ENCODE measurements at regions of chr6 and their contacts with region 1.

Region 1: GRCh38 chr6:149368065-149368464 is 32.0 kb upstream of the SUMO4 start:
- DNase-seq: no peak
- H3K4me3 Mint-ChIP-seq: no peak overlapping the region
- H3K27ac Mint-ChIP-seq: no peak overlapping the region
- H3K4me1 Mint-ChIP-seq: peaks cover 42% of the 10 kb centered on the region
- H3K27me3 Mint-ChIP-seq: no peaks in the 10 kb centered on the region

Region 2: GRCh38 chr6:149170564-149171452 is 197.3 kb before region 1 on chr6:
- intact Hi-C with region 1: no loop called
- DNase-seq: no peak
- H3K4me3 Mint-ChIP-seq: no peak overlapping the region
- H3K27ac Mint-ChIP-seq: peak overlapping the region; percentile 38
- H3K4me1 Mint-ChIP-seq: peaks cover 54% of the 10 kb centered on the region
- H3K27me3 Mint-ChIP-seq: no peaks in the 10 kb centered on the region

Region 3: GRCh38 chr6:149293244-149293643 is 74.8 kb before region 1 on chr6:
- intact Hi-C with region 1: no loop called
- DNase-seq: no peak
- H3K4me3 Mint-ChIP-seq: no peak overlapping the region
- H3K27ac Mint-ChIP-seq: no peak overlapping the region
- H3K4me1 Mint-ChIP-seq: peaks cover 7% of the 10 kb centered on the region
- H3K27me3 Mint-ChIP-seq: no peaks in the 10 kb centered on the region

Region 4: DNA sequence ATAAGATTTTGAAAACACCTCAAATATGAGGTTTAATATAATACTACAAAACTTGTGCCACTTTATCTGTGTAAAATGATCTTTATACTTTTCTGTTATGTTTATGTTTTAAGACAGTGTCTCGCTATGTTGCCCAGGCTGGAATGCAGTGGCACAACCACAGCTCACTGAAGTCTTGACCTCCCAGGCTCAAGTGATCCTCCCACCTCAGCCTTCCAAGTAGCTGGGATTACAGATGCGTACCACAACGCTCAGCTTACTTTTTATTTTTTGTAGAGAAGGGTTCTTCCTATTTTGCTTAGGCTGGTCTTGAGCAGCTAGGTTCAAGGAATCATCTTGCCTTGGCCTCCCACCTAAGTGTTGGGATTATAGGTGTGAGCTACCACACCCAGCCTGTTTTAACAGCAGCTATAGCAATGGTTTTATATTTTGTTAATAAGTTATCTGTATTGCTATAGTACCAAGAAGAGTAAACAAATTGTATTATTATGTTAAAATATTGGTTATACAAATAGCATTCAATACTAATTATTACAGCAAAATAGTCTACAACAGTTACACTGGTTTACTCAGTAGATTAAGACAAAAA is 42.3 kb before region 1 on chr6:
- intact Hi-C with region 1: no loop called
- DNase-seq: peak; percentile 56
- H3K4me3 Mint-ChIP-seq: peak overlapping the region; percentile 74
- H3K27ac Mint-ChIP-seq: peak overlapping the region; percentile 82
- H3K4me1 Mint-ChIP-seq: peaks cover 77% of the 10 kb centered on the region
- H3K27me3 Mint-ChIP-seq: no peaks in the 10 kb centered on the region

Region 5: GRCh38 chr6:149335924-149336608 is 32.0 kb before region 1 on chr6:
- intact Hi-C with region 1: loop called (anchors 1 kb)
- DNase-seq: peak; percentile 72
- H3K4me3 Mint-ChIP-seq: peak overlapping the region; percentile 74
- H3K27ac Mint-ChIP-seq: peak overlapping the region; percentile 87
- H3K4me1 Mint-ChIP-seq: peaks cover 69% of the 10 kb centered on the region
- H3K27me3 Mint-ChIP-seq: no peaks in the 10 kb centered on the region

Region 6: GRCh38 chr6:149380523-149380922 is 12.5 kb after region 1 on chr6:
- intact Hi-C with region 1: loop called (anchors 1 kb)
- DNase-seq: no peak
- H3K4me3 Mint-ChIP-seq: no peak overlapping the region
- H3K27ac Mint-ChIP-seq: peak overlapping the region; percentile 43
- H3K4me1 Mint-ChIP-seq: peaks cover 58% of the 10 kb centered on the region
- H3K27me3 Mint-ChIP-seq: no peaks in the 10 kb centered on the region

Region 7: GRCh38 chr6:149389509-149390297 is 21.6 kb after region 1 on chr6:
- intact Hi-C with region 1: loop called (anchors 2 kb)
- DNase-seq: no peak
- H3K4me3 Mint-ChIP-seq: no peak overlapping the region
- H3K27ac Mint-ChIP-seq: peak overlapping the region; percentile 46
- H3K4me1 Mint-ChIP-seq: peaks cover 60% of the 10 kb centered on the region
- H3K27me3 Mint-ChIP-seq: no peaks in the 10 kb centered on the region

Region 8: GRCh38 chr6:149405823-149406765 is 38.0 kb after region 1 on chr6:
- intact Hi-C with region 1: loop called (anchors 5 kb)
- DNase-seq: peak; percentile 48
- H3K4me3 Mint-ChIP-seq: no peak overlapping the region
- H3K27ac Mint-ChIP-seq: peak overlapping the region; percentile 87
- H3K4me1 Mint-ChIP-seq: peaks cover 48% of the 10 kb centered on the region
- H3K27me3 Mint-ChIP-seq: no peaks in the 10 kb centered on the region

Region 9: GRCh38 chr6:149529650-149530049 is 161.6 kb after region 1 on chr6:
- intact Hi-C with region 1: no loop called
- DNase-seq: no peak
- H3K4me3 Mint-ChIP-seq: no peak overlapping the region
- H3K27ac Mint-ChIP-seq: no peak overlapping the region
- H3K4me1 Mint-ChIP-seq: peaks cover 12% of the 10 kb centered on the region
- H3K27me3 Mint-ChIP-seq: no peaks in the 10 kb centered on the region

Measured in activated CD4-positive, alpha-beta T cell treated with anti-CD3 and anti-CD28 coated beads, Interleukin-2, amount 10 ng/mL, durations not matched to agents 24 days and 14 days (primary cell).